SK-N-SH (cell line): ENCODE measurements at regions of chr3 and their contacts with region 1.

Region 1: DNA sequence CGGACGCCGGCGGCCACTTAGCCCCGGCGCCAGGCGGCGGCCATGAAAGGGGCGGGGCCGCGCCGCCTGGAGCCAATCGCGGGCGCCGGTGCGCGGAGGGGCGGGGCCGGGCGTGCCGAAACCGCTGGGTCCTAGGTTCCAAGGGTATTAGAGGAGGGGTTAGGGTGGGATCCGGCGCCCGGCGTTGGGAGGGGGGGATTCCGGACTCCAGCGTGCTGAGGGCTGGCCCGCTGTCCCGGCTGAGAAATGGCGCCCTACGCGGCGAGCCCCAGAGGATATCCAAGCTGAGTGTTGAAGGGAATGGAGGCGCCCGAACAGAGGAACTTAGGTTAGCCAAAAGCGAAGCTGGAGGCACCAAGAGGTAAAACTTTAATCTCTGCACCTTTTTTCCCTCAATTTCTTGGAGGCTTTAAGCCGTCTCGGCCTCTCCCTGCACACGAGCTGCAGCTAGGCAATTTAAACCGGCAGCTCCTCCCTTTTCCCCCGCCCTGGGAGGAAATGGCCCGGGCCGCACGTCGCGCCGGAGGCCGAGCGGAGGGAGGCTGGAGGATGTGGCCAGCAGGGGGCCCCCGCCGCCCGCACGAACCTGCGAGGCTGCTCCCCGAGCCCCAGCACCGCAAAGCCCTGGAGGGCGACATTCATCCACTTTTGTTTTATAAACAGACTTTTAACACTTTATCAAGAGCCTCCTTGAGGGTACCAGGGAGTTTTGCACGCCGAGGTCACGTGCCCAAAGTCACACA is at the start of gene XXYLT1:
- DNase-seq: peak; percentile 96
- H3K4me3 ChIP-seq: peak within 1 kb of the TSS; percentile 84 to 86
- H3K27ac ChIP-seq: peak within 1 kb of the TSS; percentile 82 to 94
- H3K4me1 ChIP-seq: peaks cover 0 to 22% of the 10 kb centered on the region in 2 experiments; a peak in 2 of 4 replicates
- H3K27me3 ChIP-seq: no peaks in the 10 kb centered on the region
- CTCF ChIP-seq: peak; percentile 96
- EP300 ChIP-seq: no peak
- RAD21 ChIP-seq: peak; percentile 94
- polyA plus RNA-seq, gene XXYLT1: 22.1 and 22.6 TPM in 2 replicates

Region 2: GRCh38 chr3:195106418-195106906 is 164.8 kb before region 1 on chr3:
- CTCF ChIA-PET with region 1: interaction called, 10 read pairs
- POLR2A ChIA-PET with region 1: no interaction called
- DNase-seq: peak; percentile 94
- H3K4me3 ChIP-seq: no peak overlapping the region; a peak in 2 of 4 replicates
- H3K27ac ChIP-seq: no peak overlapping the region
- H3K4me1 ChIP-seq: peaks cover 11 to 17% of the 10 kb centered on the region in 2 experiments; a peak in 2 of 4 replicates
- H3K27me3 ChIP-seq: no peaks in the 10 kb centered on the region
- CTCF ChIP-seq: peak; percentile 97
- EP300 ChIP-seq: no peak
- RAD21 ChIP-seq: peak; percentile 88

Region 3: DNA sequence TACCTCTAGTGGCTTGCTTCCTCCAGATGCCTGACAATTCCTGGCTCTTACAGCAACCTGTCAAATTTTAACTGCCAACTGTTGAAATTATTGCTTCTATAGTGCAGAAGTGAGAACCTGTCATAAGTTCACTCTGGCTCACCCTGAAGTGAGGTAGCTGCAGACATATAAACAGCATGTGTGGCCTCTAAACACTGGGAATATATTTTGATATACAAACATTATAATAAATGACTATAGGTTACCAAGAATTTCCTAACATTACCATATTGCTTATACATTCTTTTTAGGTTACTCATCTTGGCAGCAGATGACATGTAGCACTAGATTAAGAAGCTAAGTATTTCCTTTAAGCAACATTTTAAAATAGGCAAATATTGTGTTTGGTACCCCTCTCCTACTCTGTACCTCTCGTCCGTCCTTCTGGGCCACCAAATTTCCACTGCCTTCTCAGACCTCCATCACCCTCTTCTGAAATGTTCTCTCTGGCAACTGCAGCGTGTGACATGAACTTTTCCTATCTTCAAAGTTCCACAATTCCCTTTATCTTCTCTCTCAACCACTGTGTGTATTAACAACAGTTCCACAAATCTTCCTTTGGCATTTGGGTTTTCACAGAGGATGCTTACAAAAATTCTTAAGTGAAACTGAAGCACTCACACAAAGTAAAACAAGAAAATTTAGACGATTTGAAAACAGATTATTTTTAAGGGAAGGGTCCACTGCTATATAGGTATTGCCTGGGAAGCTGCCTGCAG is 15.0 kb after region 1 on chr3:
- CTCF ChIA-PET with region 1: interaction called, 13 read pairs
- POLR2A ChIA-PET with region 1: no interaction called
- DNase-seq: no peak
- H3K4me3 ChIP-seq: no peak overlapping the region
- H3K27ac ChIP-seq: peak overlapping the region in 1 of 2 experiments; percentile 55; a peak in 3 of 4 replicates
- H3K4me1 ChIP-seq: peaks cover 0 to 13% of the 10 kb centered on the region in 2 experiments; a peak in 2 of 4 replicates
- H3K27me3 ChIP-seq: no peaks in the 10 kb centered on the region
- CTCF ChIP-seq: no peak
- EP300 ChIP-seq: no peak
- RAD21 ChIP-seq: no peak

Region 4: GRCh38 chr3:195522254-195523023 is 251.2 kb after region 1 on chr3:
- CTCF ChIA-PET with region 1: interaction called, 216 read pairs
- POLR2A ChIA-PET with region 1: interaction called, 3 read pairs
- DNase-seq: peak; percentile 61
- H3K4me3 ChIP-seq: no peak overlapping the region
- H3K27ac ChIP-seq: no peak overlapping the region
- H3K4me1 ChIP-seq: no peaks in the 10 kb centered on the region
- H3K27me3 ChIP-seq: no peaks in the 10 kb centered on the region
- CTCF ChIP-seq: peak; percentile 85
- EP300 ChIP-seq: no peak
- RAD21 ChIP-seq: peak; percentile 87